H1 (cell line): ENCODE measurements at regions of chr6 and their contacts with region 1.

Region 1: DNA sequence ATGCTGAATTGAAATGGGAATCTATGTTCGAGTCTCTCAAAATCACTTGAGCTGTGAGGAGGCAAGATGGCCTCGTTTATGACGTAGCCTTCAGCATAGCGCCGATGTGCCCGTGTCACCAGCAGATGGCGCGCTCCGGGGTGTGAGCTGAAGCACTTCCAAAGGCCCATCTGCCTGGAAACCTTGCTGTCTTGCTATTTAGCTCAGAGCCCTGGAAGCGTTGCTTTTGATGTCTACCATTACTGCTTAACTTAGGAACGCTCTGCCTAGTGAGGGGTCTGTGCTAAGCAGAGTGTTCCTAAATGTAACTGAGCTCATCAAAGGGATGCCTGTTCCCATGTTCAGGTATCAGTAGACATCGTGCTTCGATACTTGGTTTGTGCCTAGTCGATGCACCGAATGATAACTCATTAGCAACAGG is 67.7 kb downstream of the SYCP2L start:
- DNase-seq: peak; percentile 63 to 96
- H3K4me3 ChIP-seq: no peak overlapping the region
- H3K27ac ChIP-seq: no peak overlapping the region
- H3K4me1 ChIP-seq: 0 out of 7 replicates have a peak, but pooled peaks cover 0 to 3% (median 0%) of the 10 kb centered on the region in 4 experiments
- H3K27me3 ChIP-seq: peaks cover 0 to 4% (median 0%) of the 10 kb centered on the region in 4 experiments; a peak in 2 of 7 replicates
- CTCF ChIP-seq: peak; percentile 96 to 99 (median 98)
- EP300 ChIP-seq: no peak
- POLR2A ChIP-seq: no peak
- RAD21 ChIP-seq: peak; percentile 85 to 87

Region 2: DNA sequence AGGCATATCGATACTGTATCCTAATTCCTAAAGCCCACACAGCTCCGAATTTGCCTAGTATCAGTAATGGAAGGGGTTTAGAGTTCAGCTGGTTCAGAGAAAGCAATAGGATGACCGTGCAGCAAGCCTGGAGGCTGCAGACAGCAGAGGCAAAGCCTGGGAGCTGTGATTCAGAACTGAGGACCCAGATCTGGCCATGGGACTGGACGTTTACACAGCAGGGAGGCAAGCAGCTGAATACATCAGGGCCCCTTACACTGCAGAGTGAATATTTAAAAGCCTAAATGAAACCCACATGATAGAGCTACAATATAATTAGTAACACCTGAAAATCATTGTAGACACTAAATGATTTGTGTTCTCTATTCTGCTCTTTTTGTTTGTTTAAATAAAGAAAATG is 51.5 kb after region 1 on chr6:
- CTCF ChIA-PET with region 1: interaction called, 10 read pairs
- POLR2A ChIA-PET with region 1: no interaction called
- DNase-seq: no peak
- H3K4me3 ChIP-seq: no peak overlapping the region
- H3K27ac ChIP-seq: no peak overlapping the region
- H3K4me1 ChIP-seq: peaks cover 0 to 11% (median under 1%) of the 10 kb centered on the region in 4 experiments; a peak in 5 of 7 replicates
- H3K27me3 ChIP-seq: no peaks in the 10 kb centered on the region
- CTCF ChIP-seq: no peak
- EP300 ChIP-seq: no peak
- POLR2A ChIP-seq: no peak
- RAD21 ChIP-seq: no peak

Region 3: DNA sequence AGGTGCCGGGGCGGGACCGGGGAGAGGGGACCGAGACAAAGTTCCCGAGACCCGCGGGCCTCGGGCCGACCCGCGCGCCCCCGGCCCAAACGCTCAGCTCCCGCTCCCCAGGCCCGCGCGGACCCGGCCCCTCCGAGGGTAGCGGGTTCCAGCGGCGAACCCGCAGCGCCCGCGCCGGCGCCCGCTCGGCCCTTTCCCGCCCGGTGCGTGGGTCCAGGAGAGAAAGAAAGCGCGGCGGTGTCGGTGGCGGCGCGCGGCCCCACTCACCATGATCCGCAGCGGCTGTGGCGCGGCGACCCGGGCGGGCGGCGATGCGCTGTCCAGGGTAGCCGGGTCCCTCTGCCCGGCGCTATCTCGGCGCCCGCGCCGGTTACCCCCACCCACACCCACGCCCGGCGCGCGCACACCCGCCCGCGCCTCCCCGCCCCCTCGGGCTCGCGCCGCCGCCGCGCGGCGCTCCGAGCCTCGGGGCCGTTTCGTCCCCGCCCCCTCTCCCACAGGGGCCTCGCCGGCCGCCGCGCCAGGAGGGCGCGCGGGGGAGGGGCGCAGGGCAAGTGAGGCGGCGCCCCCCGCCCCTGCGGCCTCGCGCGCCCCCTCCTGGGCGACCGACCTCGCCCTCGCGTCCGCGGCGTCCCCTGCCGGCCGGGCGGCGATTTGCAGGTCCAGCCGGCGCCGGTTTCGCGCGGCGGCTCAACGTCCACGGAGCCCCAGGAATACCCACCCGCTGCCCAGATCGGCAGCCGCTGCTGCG is 89.5 kb after region 1 on chr6 and contains the start of gene ELOVL2:
- CTCF ChIA-PET with region 1: interaction called, 12 read pairs
- POLR2A ChIA-PET with region 1: no interaction called
- DNase-seq: peak in 1 of 2 experiments; percentile 90
- H3K4me3 ChIP-seq: peak within 1 kb of the TSS; percentile 39 to 76 (median 51)
- H3K27ac ChIP-seq: no peak within 1 kb of the TSS
- H3K4me1 ChIP-seq: peaks cover 0 to 6% (median 2%) of the 10 kb centered on the region in 4 experiments; a peak in 2 of 7 replicates
- H3K27me3 ChIP-seq: peaks cover 19 to 42% (median 36%) of the 10 kb centered on the region in 4 experiments
- CTCF ChIP-seq: peak; percentile 97 to 100 (median 99)
- EP300 ChIP-seq: peak in 1 of 2 experiments; percentile 22; a peak in 1 of 3 replicates
- POLR2A ChIP-seq: no peak
- RAD21 ChIP-seq: peak; percentile 57 to 77
- total RNA-seq, gene ELOVL2: 0.69 and 0.89 TPM in 2 replicates

Region 4: GRCh38 chr6:11055127-11055627 is 100.6 kb after region 1 on chr6:
- CTCF ChIA-PET with region 1: interaction called, 14 read pairs
- POLR2A ChIA-PET with region 1: no interaction called
- DNase-seq: no peak
- H3K4me3 ChIP-seq: no peak overlapping the region
- H3K27ac ChIP-seq: no peak overlapping the region
- H3K4me1 ChIP-seq: no peaks in the 10 kb centered on the region
- H3K27me3 ChIP-seq: peaks cover 0 to 1% (median 0%) of the 10 kb centered on the region in 4 experiments; a peak in 1 of 7 replicates
- CTCF ChIP-seq: no peak
- EP300 ChIP-seq: no peak
- POLR2A ChIP-seq: no peak
- RAD21 ChIP-seq: no peak

Region 5: GRCh38 chr6:11064836-11065235 is 110.2 kb after region 1 on chr6:
- CTCF ChIA-PET with region 1: interaction called, 29 read pairs
- POLR2A ChIA-PET with region 1: interaction called, 3 read pairs
- DNase-seq: no peak
- H3K4me3 ChIP-seq: no peak overlapping the region
- H3K27ac ChIP-seq: no peak overlapping the region
- H3K4me1 ChIP-seq: no peaks in the 10 kb centered on the region
- H3K27me3 ChIP-seq: no peaks in the 10 kb centered on the region
- CTCF ChIP-seq: no peak
- EP300 ChIP-seq: no peak
- POLR2A ChIP-seq: no peak
- RAD21 ChIP-seq: no peak